Mammary epithelial cell (primary cell): ENCODE measurements at regions of chr1 and their contacts with region 1.

Region 1: DNA sequence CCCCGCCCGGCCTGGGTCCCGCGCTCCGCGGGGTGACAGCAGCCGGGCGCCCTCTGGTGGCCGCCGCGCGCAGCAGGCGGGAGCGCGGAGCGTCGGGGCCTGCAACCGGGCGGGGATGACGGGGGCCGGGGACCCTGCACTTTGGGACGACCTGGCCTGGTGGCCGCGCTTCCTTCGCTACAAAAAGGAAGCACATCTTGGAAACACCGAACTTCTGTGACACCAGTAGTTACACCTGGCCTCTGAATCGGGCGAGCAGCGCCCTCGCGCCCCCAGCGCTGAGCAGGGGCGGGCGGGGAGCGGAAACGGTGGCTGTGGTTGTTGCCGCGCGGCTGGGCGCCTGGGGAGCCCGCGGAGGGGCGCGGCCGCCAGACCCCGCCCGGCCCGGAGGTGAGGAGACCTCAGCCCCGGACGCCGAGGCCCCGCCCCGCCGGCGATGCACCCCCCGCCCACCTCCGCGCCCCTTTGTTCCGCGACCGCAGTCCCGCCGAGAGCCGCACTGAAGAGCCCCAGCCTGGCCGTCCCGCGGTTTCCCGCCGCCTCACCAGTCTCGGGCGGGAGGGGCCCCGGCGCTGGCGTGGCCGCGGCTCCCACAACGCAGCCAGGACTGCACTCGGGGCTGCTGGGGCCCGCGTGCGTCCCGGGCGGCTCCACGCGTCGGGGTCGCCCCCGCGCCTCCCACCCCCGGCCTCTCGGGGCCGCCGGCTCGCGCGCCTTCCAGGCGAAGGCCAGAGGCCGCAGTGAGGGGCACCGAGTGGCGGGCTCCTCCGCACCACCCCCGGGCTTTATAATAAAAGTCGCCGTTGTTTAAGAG is 59.3 kb downstream of the H3-3A start:
- DNase-seq: peak; percentile 37
- H3K4me3 ChIP-seq: peak overlapping the region; percentile 58 to 74 (median 66)
- H3K27ac ChIP-seq: peak overlapping the region; percentile 49
- H3K4me1 ChIP-seq: peaks cover 32% of the 10 kb centered on the region
- H3K27me3 ChIP-seq: no peaks in the 10 kb centered on the region
- CTCF ChIP-seq: peak; percentile 45 to 61

Region 2: GRCh38 chr1:226062558-226063223 is 59.1 kb before region 1 on chr1 and contains the start of gene H3-3A:
- CTCF ChIA-PET with region 1: interaction called, 10 read pairs
- dilution Hi-C with region 1: no loop called
- in situ Hi-C with region 1: loop called in 1 of 2 experiments (anchors 10 kb)
- intact Hi-C with region 1: no loop called
- DNase-seq: peak; percentile 92
- H3K4me3 ChIP-seq: peak within 1 kb of the TSS; percentile 86 to 99 (median 91)
- H3K27ac ChIP-seq: peak within 1 kb of the TSS; percentile 86
- H3K4me1 ChIP-seq: peaks cover 19% of the 10 kb centered on the region
- H3K27me3 ChIP-seq: no peaks in the 10 kb centered on the region
- CTCF ChIP-seq: peak in 1 of 2 donors; percentile 13
- total RNA-seq, gene H3-3A: 209 to 262 TPM

Region 3: DNA sequence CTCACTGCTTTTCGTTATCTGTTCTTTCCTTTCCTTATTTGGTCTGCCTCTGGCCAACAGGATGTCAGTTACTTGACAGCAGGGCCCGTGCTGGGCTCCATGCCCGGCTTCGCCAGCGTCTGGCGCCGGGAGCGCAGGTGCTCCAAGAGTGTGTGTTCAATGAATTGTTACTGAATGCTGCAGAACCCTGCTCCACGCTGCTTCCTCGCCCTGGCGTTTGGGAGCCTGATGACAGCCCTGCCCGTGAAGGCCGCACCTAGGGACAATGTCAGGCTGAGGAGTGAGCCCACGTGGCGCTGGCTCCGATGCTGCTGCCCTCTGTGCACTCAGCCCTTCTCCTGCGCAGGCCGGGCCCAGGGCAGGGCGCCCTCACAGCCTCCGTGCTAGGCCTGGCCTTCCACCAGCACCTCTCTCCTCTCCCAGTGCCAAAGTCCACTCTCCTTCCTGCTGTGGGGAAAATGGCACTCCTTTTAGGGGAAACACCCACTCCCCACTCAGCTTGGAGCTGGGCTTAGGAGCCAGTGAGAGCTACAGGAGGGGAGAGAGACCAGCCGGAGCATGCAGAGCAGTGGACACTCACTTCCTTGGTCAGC is 13.4 kb after region 1 on chr1:
- CTCF ChIA-PET with region 1: interaction called, 12 read pairs
- dilution Hi-C with region 1: no loop called
- in situ Hi-C with region 1: no loop called
- intact Hi-C with region 1: no loop called
- DNase-seq: no peak
- H3K4me3 ChIP-seq: no peak overlapping the region
- H3K27ac ChIP-seq: no peak overlapping the region
- H3K4me1 ChIP-seq: peaks cover 10% of the 10 kb centered on the region
- H3K27me3 ChIP-seq: no peaks in the 10 kb centered on the region
- CTCF ChIP-seq: no peak

Region 4: GRCh38 chr1:226332947-226333346 is 211.2 kb after region 1 on chr1:
- CTCF ChIA-PET with region 1: no interaction called
- dilution Hi-C with region 1: no loop called
- in situ Hi-C with region 1: no loop called
- intact Hi-C with region 1: loop called (anchors 1 kb)
- DNase-seq: no peak
- H3K4me3 ChIP-seq: no peak overlapping the region
- H3K27ac ChIP-seq: no peak overlapping the region
- H3K4me1 ChIP-seq: no peaks in the 10 kb centered on the region
- H3K27me3 ChIP-seq: no peaks in the 10 kb centered on the region
- CTCF ChIP-seq: no peak

Region 5: DNA sequence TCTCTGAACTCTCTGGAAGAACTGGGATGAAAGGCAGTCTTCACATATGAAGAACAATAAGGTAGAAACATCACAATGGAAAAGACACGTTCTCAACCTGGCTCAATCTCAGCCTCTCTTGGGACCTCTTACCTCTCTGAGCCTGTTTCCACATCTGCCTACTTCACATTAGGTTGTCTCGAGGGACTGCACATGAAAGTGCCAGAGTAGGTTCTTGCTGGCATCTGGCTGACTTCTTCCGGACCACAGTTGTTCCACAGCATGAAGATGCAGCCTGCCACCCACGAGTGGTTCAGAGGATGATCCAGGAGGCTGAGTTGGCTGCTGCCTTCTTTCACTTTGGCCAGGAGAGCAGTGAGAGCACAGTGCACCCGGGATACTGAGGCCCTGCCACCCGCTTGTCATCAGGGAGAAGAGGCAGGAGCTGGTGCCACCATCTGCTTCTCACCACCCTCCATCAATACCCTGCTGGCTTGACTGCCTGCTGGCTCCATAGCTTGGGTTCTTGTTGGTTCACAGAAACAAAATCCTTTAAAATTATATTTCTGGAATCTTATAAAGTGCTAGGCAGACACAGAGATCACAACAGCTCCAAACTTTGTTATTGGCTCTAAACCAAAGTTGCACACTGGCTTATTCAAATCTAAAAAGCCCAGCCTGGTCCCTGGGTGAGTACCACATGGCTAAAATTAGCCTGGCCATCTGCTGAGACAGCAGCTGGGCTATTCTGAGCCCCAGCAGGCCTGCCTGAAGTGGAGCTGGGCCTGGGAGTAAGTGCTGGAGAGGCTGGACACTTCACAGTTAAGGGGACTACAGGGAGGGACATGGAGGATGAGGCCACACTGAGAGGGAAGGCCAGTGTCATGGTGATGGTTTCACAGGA is 234.1 kb after region 1 on chr1:
- CTCF ChIA-PET with region 1: no interaction called
- dilution Hi-C with region 1: no loop called
- in situ Hi-C with region 1: no loop called
- intact Hi-C with region 1: no loop called
- DNase-seq: no peak
- H3K4me3 ChIP-seq: no peak overlapping the region
- H3K27ac ChIP-seq: no peak overlapping the region
- H3K4me1 ChIP-seq: no peaks in the 10 kb centered on the region
- H3K27me3 ChIP-seq: no peaks in the 10 kb centered on the region
- CTCF ChIP-seq: no peak

Region 6: GRCh38 chr1:226626577-226626956 is 504.8 kb after region 1 on chr1:
- CTCF ChIA-PET with region 1: no interaction called
- dilution Hi-C with region 1: no loop called
- in situ Hi-C with region 1: no loop called
- intact Hi-C with region 1: loop called (anchors 10 kb)
- DNase-seq: peak; percentile 40
- H3K4me3 ChIP-seq: no peak overlapping the region
- H3K27ac ChIP-seq: no peak overlapping the region
- H3K4me1 ChIP-seq: peaks cover 7% of the 10 kb centered on the region
- H3K27me3 ChIP-seq: no peaks in the 10 kb centered on the region
- CTCF ChIP-seq: peak; percentile 83 to 92